Spleen (tissue), 13 donors: ENCODE measurements at regions of chr6 and their contacts with region 1.

Region 1: GRCh38 chr6:70884074-70884983 is 72.5 kb downstream of the B3GAT2 start:
- DNase-seq: peak; percentile 82
- H3K4me3 ChIP-seq: no peak overlapping the region
- H3K27ac ChIP-seq: no peak overlapping the region
- H3K4me1 ChIP-seq: peaks cover 0 to 6% (median 0%) of the 10 kb centered on the region in 6 donors
- H3K27me3 ChIP-seq: no peaks in the 10 kb centered on the region
- CTCF ChIP-seq: peak; percentile 74 to 90 (median 87)
- POLR2A ChIP-seq: no peak

Region 2: GRCh38 chr6:70520575-70520974 is 363.8 kb before region 1 on chr6:
- intact Hi-C with region 1: loop called (anchors 10 kb)
- DNase-seq: no peak
- H3K4me3 ChIP-seq: no peak overlapping the region
- H3K27ac ChIP-seq: no peak overlapping the region
- H3K4me1 ChIP-seq: no peaks in the 10 kb centered on the region
- H3K27me3 ChIP-seq: no peaks in the 10 kb centered on the region
- CTCF ChIP-seq: peak in 2 of 11 experiments; percentile 13 to 24
- POLR2A ChIP-seq: no peak

Region 3: GRCh38 chr6:70629929-70630328 is 254.4 kb before region 1 on chr6:
- intact Hi-C with region 1: no loop called
- DNase-seq: no peak
- H3K4me3 ChIP-seq: no peak overlapping the region
- H3K27ac ChIP-seq: no peak overlapping the region
- H3K4me1 ChIP-seq: no peaks in the 10 kb centered on the region
- H3K27me3 ChIP-seq: no peaks in the 10 kb centered on the region
- CTCF ChIP-seq: no peak
- POLR2A ChIP-seq: no peak

Region 4: DNA sequence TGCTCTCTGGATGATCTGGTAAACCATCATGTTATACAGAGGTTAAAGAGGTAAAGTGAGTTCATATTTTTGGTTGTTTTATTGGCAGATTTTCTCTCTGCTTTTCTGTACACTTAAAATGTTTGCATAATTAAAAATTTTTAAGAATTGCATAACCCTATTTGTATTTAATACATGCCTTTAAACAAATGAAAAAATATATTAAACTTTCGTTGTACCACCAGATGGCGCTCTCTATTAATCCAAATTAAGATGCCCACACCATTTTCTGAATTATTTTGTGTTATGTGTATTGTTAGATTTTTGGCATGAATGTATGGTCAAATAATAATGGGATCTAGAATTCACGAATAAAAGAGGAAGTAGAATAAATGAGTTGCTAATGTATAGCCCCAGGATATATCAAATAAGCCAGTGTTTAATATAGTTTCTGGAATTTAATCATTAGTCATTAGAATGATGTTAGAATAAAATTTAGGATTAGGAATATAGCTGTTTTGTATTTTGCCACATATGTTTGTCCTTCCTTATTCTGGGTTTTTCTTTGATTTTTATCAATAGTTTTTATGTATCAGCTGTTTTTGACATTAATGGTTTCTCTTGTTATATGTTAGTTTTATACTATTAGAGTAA is 177.7 kb before region 1 on chr6:
- intact Hi-C with region 1: loop called (anchors 5 kb)
- DNase-seq: no peak
- H3K4me3 ChIP-seq: no peak overlapping the region
- H3K27ac ChIP-seq: no peak overlapping the region
- H3K4me1 ChIP-seq: peaks cover 6 to 33% (median 12%) of the 10 kb centered on the region in 6 donors
- H3K27me3 ChIP-seq: no peaks in the 10 kb centered on the region
- CTCF ChIP-seq: peak in 8 of 11 experiments; percentile 34 to 69 (median 53)
- POLR2A ChIP-seq: no peak